MCF 10A (cell line): ENCODE measurements at regions of chr13 and their contacts with region 1.

Region 1: DNA sequence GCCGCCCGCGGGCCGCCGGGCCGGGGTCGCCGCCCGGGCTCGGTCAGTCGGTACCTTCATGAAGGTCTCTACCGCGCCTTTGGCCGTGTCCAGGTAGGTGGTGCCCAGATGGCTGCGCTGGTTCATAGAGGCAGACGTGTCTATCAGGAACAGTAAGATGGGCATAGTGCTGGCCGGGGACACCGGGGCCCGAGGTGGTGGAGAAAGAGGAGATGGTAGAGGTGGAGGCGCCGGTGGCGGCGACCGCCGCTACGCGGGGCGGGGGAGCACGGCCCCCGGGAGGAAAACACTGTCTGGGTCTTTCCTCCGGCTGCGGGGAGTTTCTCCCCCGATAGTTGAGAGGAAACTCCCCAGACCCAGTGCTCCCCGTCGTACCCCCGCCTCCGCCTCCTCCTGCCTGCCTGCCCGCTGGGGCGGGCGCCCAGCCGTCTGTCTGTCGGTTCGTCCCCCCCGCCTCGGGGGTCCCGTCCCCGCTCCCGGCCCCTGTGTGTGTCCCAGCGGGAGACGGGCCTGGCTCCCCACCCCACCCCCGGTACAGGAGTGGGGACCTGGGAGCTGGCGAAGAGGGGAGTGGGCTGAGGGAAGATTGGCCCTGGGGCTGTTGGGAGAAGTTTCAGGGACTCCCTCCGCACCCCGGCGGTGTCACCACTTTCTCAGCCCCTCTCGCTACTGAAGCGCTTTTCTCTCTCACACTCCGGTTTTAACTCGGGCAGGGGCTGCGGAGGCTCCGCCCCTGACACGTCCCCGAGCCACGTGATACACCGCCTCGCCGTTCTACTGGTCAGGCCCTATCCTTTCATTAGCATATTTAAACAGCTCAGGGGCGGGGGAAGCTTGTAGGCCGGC is at the start of gene INTS6:
- DNase-seq: peak; percentile 99
- H3K4me3 Mint-ChIP-seq: peak within 1 kb of the TSS; percentile 80
- H3K27ac Mint-ChIP-seq: peak within 1 kb of the TSS; percentile 94
- H3K4me1 Mint-ChIP-seq: peaks cover 24% of the 10 kb centered on the region
- H3K27me3 Mint-ChIP-seq: no peaks in the 10 kb centered on the region
- CTCF ChIP-seq: no peak
- total RNA-seq, gene INTS6: 74.2 and 78.5 TPM in 2 replicates

Region 2: DNA sequence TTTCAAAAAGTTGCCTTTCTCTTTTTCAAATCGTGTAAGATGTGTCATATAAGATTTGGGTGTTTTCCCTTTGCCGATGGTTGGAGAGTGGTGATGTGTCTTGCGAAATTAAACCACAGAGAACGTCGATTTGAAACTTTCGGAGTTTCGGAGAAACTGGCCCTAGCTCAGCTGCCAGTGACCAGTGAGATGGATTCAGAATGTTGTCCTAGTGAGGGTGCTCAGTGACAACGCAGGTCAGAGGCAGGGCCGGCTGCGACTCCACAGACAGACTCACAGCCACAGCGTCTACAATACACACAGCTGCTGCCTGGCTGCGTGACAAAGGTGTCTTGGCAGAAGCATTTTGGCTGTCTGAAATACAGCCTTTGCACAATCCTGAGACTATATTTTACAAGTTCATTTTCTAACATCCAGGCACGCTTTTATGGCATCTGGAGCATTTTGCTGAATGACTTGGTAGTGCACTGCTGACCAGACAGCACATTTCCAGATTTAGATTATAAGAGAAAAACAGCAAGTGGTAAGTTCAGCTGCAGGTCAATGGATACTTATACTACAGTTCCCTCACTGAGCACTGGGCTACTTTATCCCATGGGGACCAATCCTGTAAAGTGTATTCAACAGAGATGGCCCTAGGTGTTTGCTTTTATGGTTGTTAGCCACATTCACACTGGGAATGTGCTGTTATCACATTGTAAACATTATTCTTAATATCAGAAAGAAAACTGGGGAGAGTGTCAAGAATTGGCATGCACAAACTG is 1229.8 kb before region 1 on chr13:
- CTCF ChIA-PET with region 1: no interaction called
- POLR2A ChIA-PET with region 1: no interaction called
- intact Hi-C with region 1: no loop called
- DNase-seq: peak; percentile 95
- H3K4me3 Mint-ChIP-seq: peak overlapping the region; percentile 72
- H3K27ac Mint-ChIP-seq: peak overlapping the region; percentile 98
- H3K4me1 Mint-ChIP-seq: peaks cover 40% of the 10 kb centered on the region
- H3K27me3 Mint-ChIP-seq: no peaks in the 10 kb centered on the region
- CTCF ChIP-seq: no peak

Region 3: GRCh38 chr13:50969691-50970090 is 482.9 kb before region 1 on chr13:
- CTCF ChIA-PET with region 1: no interaction called
- POLR2A ChIA-PET with region 1: no interaction called
- intact Hi-C with region 1: no loop called
- DNase-seq: peak; percentile 14
- H3K4me3 Mint-ChIP-seq: no peak overlapping the region
- H3K27ac Mint-ChIP-seq: no peak overlapping the region
- H3K4me1 Mint-ChIP-seq: no peaks in the 10 kb centered on the region
- H3K27me3 Mint-ChIP-seq: no peaks in the 10 kb centered on the region
- CTCF ChIP-seq: no peak

Region 4: DNA sequence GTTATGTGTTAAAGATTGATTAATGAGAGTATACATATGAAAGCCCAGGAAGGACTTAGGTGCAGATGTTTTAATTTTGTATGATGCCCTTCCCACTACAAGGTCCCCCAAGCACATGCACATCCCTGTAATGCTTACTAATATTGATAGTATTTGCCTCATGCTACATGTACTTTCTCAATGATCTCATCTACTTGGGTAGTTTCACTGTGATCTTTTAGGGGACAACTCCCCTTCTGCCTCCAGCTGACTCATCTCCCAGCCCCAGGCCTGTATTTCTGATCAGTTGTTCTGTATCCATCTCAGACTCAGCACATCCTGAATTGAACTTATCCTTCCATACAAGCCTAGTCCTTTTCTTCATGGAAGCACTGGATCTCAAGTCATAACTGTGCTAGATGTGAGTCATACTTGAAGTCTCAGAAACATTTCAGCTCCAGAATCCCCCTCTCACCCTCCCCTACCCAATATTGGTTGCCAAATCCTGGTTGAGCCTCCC is 49.6 kb after region 1 on chr13:
- CTCF ChIA-PET with region 1: no interaction called
- POLR2A ChIA-PET with region 1: interaction called, 11 read pairs
- intact Hi-C with region 1: no loop called
- DNase-seq: no peak
- H3K4me3 Mint-ChIP-seq: no peak overlapping the region
- H3K27ac Mint-ChIP-seq: peak overlapping the region; percentile 2
- H3K4me1 Mint-ChIP-seq: peaks cover 18% of the 10 kb centered on the region
- H3K27me3 Mint-ChIP-seq: no peaks in the 10 kb centered on the region
- CTCF ChIP-seq: no peak

Region 5: DNA sequence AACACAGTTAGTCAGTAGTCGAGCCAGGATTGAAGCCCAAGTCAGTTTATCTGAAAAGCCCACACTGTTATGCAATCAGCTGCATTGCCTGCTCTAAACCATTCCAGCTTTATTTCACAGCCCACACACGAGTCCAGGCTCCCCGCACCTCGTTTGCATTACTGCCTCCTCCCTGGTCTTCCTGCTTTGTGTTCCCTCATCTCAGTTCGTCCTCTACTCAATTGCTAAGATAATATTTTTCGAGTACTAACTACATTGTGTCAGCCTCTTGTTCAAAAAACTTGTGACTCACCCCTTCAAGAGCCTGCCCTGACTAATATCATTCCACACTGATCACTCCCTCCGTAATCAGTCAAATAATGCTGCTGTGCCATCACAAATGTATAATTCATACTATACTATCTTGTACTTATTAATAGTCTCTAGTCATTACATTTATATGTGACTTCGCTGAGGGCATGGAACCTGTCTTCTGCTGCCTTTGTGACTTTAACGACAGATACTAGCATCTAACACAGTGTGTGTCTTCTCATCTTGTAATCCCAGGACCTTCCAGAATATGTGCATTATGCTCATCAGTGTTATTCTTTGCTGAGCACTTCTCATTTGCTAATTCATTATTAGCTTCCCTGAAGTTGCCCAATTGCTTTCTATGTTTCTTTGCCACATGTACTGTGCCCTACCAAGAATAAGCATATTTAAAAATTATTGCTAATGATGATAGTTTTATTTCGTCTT is 105.5 kb after region 1 on chr13:
- CTCF ChIA-PET with region 1: interaction called, 5 read pairs
- POLR2A ChIA-PET with region 1: interaction called, 110 read pairs
- intact Hi-C with region 1: no loop called
- DNase-seq: peak; percentile 79
- H3K4me3 Mint-ChIP-seq: peak overlapping the region; percentile 53
- H3K27ac Mint-ChIP-seq: peak overlapping the region; percentile 69
- H3K4me1 Mint-ChIP-seq: peaks cover 39% of the 10 kb centered on the region
- H3K27me3 Mint-ChIP-seq: no peaks in the 10 kb centered on the region
- CTCF ChIP-seq: no peak

Region 6: DNA sequence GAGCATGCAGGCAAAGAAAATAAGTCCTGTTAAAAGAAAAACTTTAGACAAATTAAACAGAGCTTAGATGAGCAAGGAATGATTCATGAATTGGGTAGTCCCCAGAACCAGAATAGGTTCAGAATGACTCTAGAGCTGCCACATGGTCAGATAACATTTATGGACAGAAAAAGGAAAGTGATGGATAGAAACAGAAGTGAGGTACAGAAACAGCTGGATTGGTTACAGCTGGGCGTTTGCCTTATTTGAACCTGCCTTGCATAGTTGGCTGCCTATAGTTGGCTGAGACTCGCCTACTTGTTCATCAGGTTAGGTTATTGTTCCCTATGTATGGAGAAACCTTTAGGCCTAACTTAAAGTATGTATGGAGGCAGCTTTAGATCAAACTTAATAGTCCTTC is 167.0 kb after region 1 on chr13:
- CTCF ChIA-PET with region 1: no interaction called
- POLR2A ChIA-PET with region 1: interaction called, 11 read pairs
- intact Hi-C with region 1: no loop called
- DNase-seq: no peak
- H3K4me3 Mint-ChIP-seq: no peak overlapping the region
- H3K27ac Mint-ChIP-seq: peak overlapping the region; percentile 14
- H3K4me1 Mint-ChIP-seq: peaks cover 58% of the 10 kb centered on the region
- H3K27me3 Mint-ChIP-seq: no peaks in the 10 kb centered on the region
- CTCF ChIP-seq: no peak

Region 7: DNA sequence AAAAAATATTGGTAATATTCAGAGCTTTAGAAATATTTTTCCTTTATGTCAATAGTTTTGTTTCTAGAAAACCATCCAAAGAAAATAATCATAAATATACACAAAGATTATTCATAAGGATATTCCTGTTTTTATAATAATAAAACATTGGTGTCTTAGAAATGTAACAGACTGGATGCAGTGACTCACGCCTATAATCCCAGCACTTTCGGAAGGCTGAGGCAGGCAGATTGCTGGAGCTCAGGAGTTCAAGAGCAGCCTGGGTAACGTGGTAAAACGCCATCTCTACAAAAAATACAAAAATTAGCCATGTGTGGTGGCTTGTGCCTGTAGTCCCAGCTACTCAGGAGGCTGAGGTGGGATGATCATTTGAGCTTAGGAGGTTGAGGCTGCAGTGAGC is 244.6 kb after region 1 on chr13:
- CTCF ChIA-PET with region 1: no interaction called
- POLR2A ChIA-PET with region 1: interaction called, 23 read pairs
- intact Hi-C with region 1: no loop called
- DNase-seq: peak; percentile 51
- H3K4me3 Mint-ChIP-seq: no peak overlapping the region
- H3K27ac Mint-ChIP-seq: peak overlapping the region; percentile 69
- H3K4me1 Mint-ChIP-seq: peaks cover 18% of the 10 kb centered on the region
- H3K27me3 Mint-ChIP-seq: no peaks in the 10 kb centered on the region
- CTCF ChIP-seq: no peak

Region 8: GRCh38 chr13:51803422-51804294 is 351.1 kb after region 1 on chr13 and contains the start of gene DHRS12:
- CTCF ChIA-PET with region 1: interaction called, 11 read pairs
- POLR2A ChIA-PET with region 1: interaction called, 16 read pairs
- intact Hi-C with region 1: loop called (anchors 5 kb)
- DNase-seq: peak; percentile 84
- H3K4me3 Mint-ChIP-seq: peak within 1 kb of the TSS; percentile 74
- H3K27ac Mint-ChIP-seq: peak within 1 kb of the TSS; percentile 87
- H3K4me1 Mint-ChIP-seq: peaks cover 16% of the 10 kb centered on the region
- H3K27me3 Mint-ChIP-seq: no peaks in the 10 kb centered on the region
- CTCF ChIP-seq: no peak
- total RNA-seq, gene DHRS12: 6.2 and 6.8 TPM in 2 replicates